ENCODE measurements at regions of chr10 and their contacts with region 1.

Region 1: GRCh38 chr10:62050893-62051433 is 149.5 kb downstream of the ARID5B start:
- DNase-seq: peak; percentile 86
- H3K4me3 Mint-ChIP-seq: peak overlapping the region; percentile 98
- H3K27ac Mint-ChIP-seq: peak overlapping the region; percentile 99
- H3K4me1 Mint-ChIP-seq: peaks cover 75% of the 10 kb centered on the region
- H3K27me3 Mint-ChIP-seq: no peaks in the 10 kb centered on the region

Region 2: DNA sequence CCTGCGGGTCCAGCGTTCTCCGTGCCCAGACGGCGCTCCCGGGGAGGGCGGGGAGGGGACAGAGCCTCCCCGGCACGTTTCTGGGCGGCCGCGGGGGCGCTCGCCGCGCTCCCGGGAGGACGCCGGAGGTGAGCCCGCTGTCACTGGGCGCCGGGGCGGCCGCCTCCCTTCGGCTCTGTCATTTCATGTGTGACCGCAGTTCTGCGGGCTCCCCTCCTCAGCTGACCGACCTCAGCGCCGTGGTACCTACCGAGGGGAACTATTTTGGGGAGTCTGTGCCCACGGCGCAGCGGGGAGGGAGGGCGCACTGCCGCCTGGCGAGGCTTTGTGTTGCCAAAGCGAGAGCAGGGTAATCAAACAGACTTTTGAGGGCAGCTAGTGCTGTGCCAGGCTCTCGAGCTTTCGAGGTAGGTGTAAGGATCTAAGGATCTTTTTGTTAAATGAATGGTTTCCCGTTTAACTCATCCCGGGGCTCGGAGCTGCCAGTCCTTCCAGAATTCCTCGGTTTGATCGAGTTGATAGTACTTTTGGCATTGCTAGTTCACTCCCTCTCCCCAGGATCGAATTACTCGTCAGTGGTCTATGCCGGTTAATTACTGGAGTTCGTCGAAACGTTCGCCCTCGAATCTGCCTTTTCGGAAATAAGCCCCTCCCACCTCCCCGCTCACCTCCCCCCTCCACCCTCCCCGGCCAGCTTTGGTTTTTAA is 147.6 kb before region 1 on chr10:
- CTCF ChIA-PET with region 1: interaction called, 37 read pairs
- POLR2A ChIA-PET with region 1: interaction called, 785 read pairs
- DNase-seq: peak; percentile 82
- H3K4me3 Mint-ChIP-seq: peak overlapping the region; percentile 94
- H3K27ac Mint-ChIP-seq: peak overlapping the region; percentile 98
- H3K4me1 Mint-ChIP-seq: peaks cover 37% of the 10 kb centered on the region
- H3K27me3 Mint-ChIP-seq: no peaks in the 10 kb centered on the region

Region 3: DNA sequence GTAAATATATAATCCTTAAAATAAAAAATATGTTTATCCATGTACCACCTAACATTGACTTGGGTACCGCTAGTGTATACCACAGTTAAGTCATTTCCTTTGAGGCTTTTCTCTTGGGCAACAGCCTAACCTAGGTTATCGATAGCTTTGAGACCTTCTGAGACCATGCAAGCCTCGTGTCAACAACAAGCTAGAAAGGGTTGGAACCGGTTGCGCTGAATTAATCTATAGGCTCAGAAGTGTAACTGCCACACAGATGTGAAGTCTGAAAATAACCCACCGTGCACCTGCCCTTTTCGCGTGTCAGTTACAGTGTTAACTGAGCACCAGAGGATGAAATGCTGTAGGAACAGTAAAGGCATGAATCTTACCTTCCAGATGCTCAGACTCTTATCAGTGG is 89.7 kb before region 1 on chr10:
- CTCF ChIA-PET with region 1: no interaction called
- POLR2A ChIA-PET with region 1: interaction called, 39 read pairs
- DNase-seq: peak; percentile 59
- H3K4me3 Mint-ChIP-seq: peak overlapping the region; percentile 39
- H3K27ac Mint-ChIP-seq: peak overlapping the region; percentile 90
- H3K4me1 Mint-ChIP-seq: peaks cover 81% of the 10 kb centered on the region
- H3K27me3 Mint-ChIP-seq: no peaks in the 10 kb centered on the region

Region 4: GRCh38 chr10:62038609-62039190 is 12.3 kb before region 1 on chr10:
- CTCF ChIA-PET with region 1: interaction called, 112 read pairs
- POLR2A ChIA-PET with region 1: interaction called, 440 read pairs
- DNase-seq: peak; percentile 83
- H3K4me3 Mint-ChIP-seq: peak overlapping the region; percentile 54
- H3K27ac Mint-ChIP-seq: peak overlapping the region; percentile 74
- H3K4me1 Mint-ChIP-seq: peaks cover 72% of the 10 kb centered on the region
- H3K27me3 Mint-ChIP-seq: no peaks in the 10 kb centered on the region

Region 5: GRCh38 chr10:62082729-62083411 is 31.9 kb after region 1 on chr10:
- CTCF ChIA-PET with region 1: interaction called, 10 read pairs
- POLR2A ChIA-PET with region 1: interaction called, 151 read pairs
- DNase-seq: peak; percentile 69
- H3K4me3 Mint-ChIP-seq: peak overlapping the region; percentile 61
- H3K27ac Mint-ChIP-seq: peak overlapping the region; percentile 92
- H3K4me1 Mint-ChIP-seq: peaks cover 81% of the 10 kb centered on the region
- H3K27me3 Mint-ChIP-seq: no peaks in the 10 kb centered on the region

Region 6: DNA sequence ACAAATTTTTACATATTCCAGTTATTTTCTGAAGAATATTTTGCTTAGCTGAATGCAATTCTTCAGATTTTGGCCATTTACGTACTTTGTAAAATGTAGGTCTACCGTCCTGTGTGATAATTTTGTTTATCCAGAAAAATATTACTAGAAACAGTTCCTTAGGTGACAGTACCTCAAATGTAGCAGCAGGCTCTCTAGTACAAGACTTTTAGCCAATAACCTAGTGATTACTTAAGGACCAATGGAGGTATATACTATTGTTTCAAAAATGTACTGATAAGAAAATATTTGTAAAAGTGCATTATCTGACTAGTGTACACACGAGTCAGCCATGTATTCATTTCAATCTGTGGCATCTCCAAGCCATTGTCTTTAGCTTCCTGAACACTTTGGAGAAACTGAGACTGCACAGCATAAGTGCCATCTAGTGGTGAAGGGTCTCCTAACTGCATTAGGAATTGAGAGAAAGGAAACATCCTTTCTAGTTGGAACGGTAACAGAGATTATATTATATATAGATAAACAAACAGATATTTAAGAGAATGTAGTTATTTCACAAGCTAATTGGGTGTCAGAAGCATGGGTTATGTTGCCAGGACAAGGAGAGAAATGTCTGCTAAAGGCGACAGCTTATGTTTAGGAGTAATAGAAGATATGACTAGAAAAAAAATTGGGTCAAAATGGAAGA is 194.0 kb after region 1 on chr10:
- CTCF ChIA-PET with region 1: interaction called, 42 read pairs
- POLR2A ChIA-PET with region 1: interaction called, 114 read pairs
- DNase-seq: peak; percentile 59
- H3K4me3 Mint-ChIP-seq: peak overlapping the region; percentile 52
- H3K27ac Mint-ChIP-seq: peak overlapping the region; percentile 65
- H3K4me1 Mint-ChIP-seq: peaks cover 38% of the 10 kb centered on the region
- H3K27me3 Mint-ChIP-seq: no peaks in the 10 kb centered on the region

Region 7: DNA sequence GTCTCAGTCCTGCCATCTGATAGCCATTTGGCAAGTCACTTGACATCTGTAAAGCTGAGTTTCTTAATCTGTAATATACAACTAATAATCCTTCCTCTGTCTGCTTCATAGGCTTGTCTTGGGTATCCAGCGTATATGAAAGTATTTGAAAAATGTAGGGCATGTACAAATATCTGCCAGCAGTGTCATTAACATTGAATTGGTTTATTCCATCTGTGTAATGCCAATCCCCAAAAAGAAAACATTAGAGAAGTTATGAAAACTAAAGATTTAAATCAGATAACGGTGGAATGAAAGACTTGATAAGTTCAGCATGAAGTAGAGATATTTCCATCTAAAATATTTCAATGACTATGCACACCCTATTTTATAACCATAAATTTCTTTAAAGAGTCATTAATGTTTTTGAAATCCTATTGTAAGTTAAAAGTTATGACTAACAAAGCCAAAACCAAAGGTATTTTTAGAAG is 227.5 kb after region 1 on chr10:
- CTCF ChIA-PET with region 1: no interaction called
- POLR2A ChIA-PET with region 1: no interaction called
- DNase-seq: no peak
- H3K4me3 Mint-ChIP-seq: no peak overlapping the region
- H3K27ac Mint-ChIP-seq: no peak overlapping the region
- H3K4me1 Mint-ChIP-seq: no peaks in the 10 kb centered on the region
- H3K27me3 Mint-ChIP-seq: peaks cover 1% of the 10 kb centered on the region

Region 8: GRCh38 chr10:62583876-62584615 is 533.1 kb after region 1 on chr10:
- CTCF ChIA-PET with region 1: no interaction called
- POLR2A ChIA-PET with region 1: no interaction called
- DNase-seq: no peak
- H3K4me3 Mint-ChIP-seq: no peak overlapping the region
- H3K27ac Mint-ChIP-seq: no peak overlapping the region
- H3K4me1 Mint-ChIP-seq: no peaks in the 10 kb centered on the region
- H3K27me3 Mint-ChIP-seq: peaks cover 9% of the 10 kb centered on the region

Measured in activated CD4-positive, alpha-beta memory T cell treated with anti-CD3 and anti-CD28 coated beads, Interleukin-2, amount 10 ng/mL, durations not matched to agents 7 days and 5 days (primary cell).